ENCODE measurements at regions of chr12 and their contacts with region 1.

Region 1: GRCh38 chr12:14365294-14366208 is at the start of gene ATF7IP:
- DNase-seq: peak; percentile 94 to 95
- H3K4me3 ChIP-seq: peak within 1 kb of the TSS; percentile 90
- H3K27ac ChIP-seq: peak within 1 kb of the TSS; percentile 89
- H3K4me1 ChIP-seq: peaks cover 23% of the 10 kb centered on the region
- H3K27me3 ChIP-seq: no peaks in the 10 kb centered on the region
- CTCF ChIP-seq: no peak; the same call in 1 of the 2 replicates
- total RNA-seq, gene ATF7IP: 72.2 and 94.7 TPM in 2 replicates

Region 2: GRCh38 chr12:14185427-14186192 is 179.9 kb before region 1 on chr12:
- CTCF ChIA-PET with region 1: interaction called, 4 read pairs
- POLR2A ChIA-PET with region 1: no interaction called
- intact Hi-C with region 1: loop called (anchors 2 kb)
- DNase-seq: peak; percentile 39 to 48
- H3K4me3 ChIP-seq: no peak overlapping the region
- H3K27ac ChIP-seq: no peak overlapping the region
- H3K4me1 ChIP-seq: 0 out of 2 replicates have a peak, but pooled peaks cover 7% of the 10 kb centered on the region
- H3K27me3 ChIP-seq: no peaks in the 10 kb centered on the region
- CTCF ChIP-seq: peak; percentile 83

Region 3: DNA sequence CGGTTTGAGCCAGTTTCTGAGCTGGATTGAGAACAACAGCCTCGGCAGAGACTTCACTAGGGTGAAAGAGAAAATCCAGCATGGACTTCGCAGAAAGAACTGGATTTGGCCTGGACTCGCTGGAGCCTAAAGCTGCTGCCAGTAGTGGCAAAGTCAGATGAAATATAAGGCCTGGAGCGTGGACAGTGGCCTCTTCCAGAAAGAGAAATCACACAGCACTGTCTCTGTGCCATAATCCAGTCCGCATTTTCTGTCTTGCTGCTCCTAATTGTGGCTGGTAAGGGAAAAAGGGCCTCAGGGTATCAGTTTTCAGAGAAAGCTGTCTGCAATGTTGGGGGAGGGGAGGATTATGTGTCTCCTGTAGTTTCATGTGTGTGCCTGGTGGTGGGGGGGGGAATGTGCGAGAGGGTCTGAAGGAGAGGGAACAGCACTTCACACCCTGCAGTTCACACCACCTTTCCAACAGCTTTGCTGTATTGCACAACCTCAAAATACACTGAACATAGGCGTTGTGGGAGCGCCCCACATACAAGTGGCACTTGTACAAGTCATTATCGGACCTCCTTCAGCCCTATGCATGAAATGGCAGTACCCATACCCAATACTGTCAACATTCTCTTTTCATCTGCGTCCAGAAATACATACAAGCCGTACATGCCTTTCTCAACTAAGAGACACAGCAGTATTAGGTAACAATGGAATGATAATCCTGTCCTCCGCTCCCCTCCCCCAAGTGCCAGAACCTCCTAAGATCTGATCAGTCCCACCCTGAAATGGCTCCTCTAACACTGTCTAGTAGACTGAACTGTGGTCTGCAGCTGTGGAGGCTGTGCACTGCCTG is 107.6 kb before region 1 on chr12:
- CTCF ChIA-PET with region 1: interaction called, 4 read pairs
- POLR2A ChIA-PET with region 1: interaction called, 11 read pairs
- intact Hi-C with region 1: loop called (anchors 1 kb)
- DNase-seq: peak; percentile 86 to 95
- H3K4me3 ChIP-seq: no peak overlapping the region
- H3K27ac ChIP-seq: peak overlapping the region; percentile 93
- H3K4me1 ChIP-seq: peaks cover 40% of the 10 kb centered on the region
- H3K27me3 ChIP-seq: no peaks in the 10 kb centered on the region
- CTCF ChIP-seq: no peak

Region 4: GRCh38 chr12:14390870-14391530 is 25.4 kb after region 1 on chr12:
- CTCF ChIA-PET with region 1: no interaction called
- POLR2A ChIA-PET with region 1: no interaction called
- intact Hi-C with region 1: no loop called
- DNase-seq: no peak
- H3K4me3 ChIP-seq: no peak overlapping the region
- H3K27ac ChIP-seq: no peak overlapping the region
- H3K4me1 ChIP-seq: no peaks in the 10 kb centered on the region
- H3K27me3 ChIP-seq: no peaks in the 10 kb centered on the region
- CTCF ChIP-seq: no peak

Region 5: GRCh38 chr12:14403711-14404196 is 38.2 kb after region 1 on chr12:
- CTCF ChIA-PET with region 1: interaction called, 11 read pairs
- POLR2A ChIA-PET with region 1: no interaction called
- intact Hi-C with region 1: no loop called
- DNase-seq: no peak
- H3K4me3 ChIP-seq: no peak overlapping the region
- H3K27ac ChIP-seq: peak overlapping the region; percentile 1; the same call in 1 of the 2 replicates
- H3K4me1 ChIP-seq: peaks cover 9% of the 10 kb centered on the region; the same call in 1 of the 2 replicates
- H3K27me3 ChIP-seq: no peaks in the 10 kb centered on the region
- CTCF ChIP-seq: no peak

Region 6: GRCh38 chr12:14417715-14418114 is 52.2 kb after region 1 on chr12:
- CTCF ChIA-PET with region 1: interaction called, 5 read pairs
- POLR2A ChIA-PET with region 1: interaction called, 9 read pairs
- intact Hi-C with region 1: loop called (anchors 5 kb)
- DNase-seq: peak in 1 of 2 experiments; percentile 61
- H3K4me3 ChIP-seq: no peak overlapping the region
- H3K27ac ChIP-seq: no peak overlapping the region
- H3K4me1 ChIP-seq: no peaks in the 10 kb centered on the region; the same call in 1 of the 2 replicates
- H3K27me3 ChIP-seq: no peaks in the 10 kb centered on the region
- CTCF ChIP-seq: no peak

Region 7: DNA sequence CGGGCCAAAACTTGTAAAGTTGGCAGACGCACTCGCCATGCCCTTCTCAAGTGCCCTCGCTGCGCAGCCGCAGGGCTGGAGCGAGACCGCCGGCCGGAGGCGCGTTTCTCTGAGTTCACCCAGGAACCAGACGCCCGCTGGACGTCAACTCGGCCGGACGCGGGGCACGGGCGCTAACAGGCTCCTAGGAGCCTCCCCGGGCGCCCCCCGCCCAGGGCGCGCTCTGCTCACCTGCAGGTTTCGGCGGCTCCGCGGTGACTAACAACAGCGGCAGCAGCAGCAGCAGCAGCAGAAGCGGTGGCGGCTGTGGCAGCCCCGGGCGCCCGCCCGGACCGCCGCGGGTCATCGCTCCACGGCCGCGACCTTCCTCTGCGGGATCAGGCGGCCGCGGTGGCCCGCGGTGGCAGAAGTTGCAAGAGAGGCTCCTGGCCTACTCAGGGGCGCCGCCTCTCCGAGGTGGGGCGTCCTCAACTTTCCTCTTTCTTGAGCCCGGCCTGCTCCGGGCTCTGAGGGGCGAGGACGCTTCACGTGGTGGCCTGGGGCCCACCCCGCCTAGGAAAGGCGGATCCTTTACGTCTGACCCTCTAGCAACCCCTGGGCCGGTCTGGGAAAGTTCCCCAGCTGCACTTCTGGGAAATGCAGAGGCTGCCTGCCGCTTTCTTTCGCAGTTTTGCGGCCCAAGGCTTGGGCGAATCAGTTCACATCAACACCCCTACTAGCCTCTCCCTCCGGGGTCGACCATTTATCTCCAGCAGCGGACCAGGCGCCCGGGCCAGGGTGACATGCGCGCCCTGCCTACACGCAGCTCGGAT is 202.0 kb after region 1 on chr12 and contains the start of gene PLBD1:
- CTCF ChIA-PET with region 1: no interaction called
- POLR2A ChIA-PET with region 1: interaction called, 3 read pairs
- intact Hi-C with region 1: loop called (anchors 5 kb)
- DNase-seq: peak; percentile 40 to 59
- H3K4me3 ChIP-seq: peak within 1 kb of the TSS; percentile 60
- H3K27ac ChIP-seq: no peak within 1 kb of the TSS
- H3K4me1 ChIP-seq: no peaks in the 10 kb centered on the region
- H3K27me3 ChIP-seq: no peaks in the 10 kb centered on the region
- CTCF ChIP-seq: no peak
- total RNA-seq, gene PLBD1: 13.8 and 17.8 TPM in 2 replicates

Region 8: DNA sequence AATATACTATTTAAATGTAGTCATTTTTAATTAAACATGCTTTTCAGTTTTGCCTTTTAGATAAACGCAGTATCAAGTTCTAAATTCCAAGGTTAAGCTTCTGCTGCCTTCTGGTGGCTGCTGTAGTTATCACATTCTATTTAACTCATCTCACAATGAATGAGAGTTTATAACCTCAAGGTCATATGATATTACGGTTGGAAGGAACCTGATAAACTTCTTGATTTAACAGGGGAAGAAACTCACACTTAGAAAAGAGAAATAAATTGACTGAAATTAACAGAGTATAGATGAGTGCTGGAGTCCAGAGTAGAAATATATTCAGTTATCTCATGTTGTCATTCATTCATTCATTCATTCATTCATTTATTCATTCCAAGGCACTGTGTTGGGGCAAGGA is 299.0 kb after region 1 on chr12:
- CTCF ChIA-PET with region 1: no interaction called
- POLR2A ChIA-PET with region 1: no interaction called
- intact Hi-C with region 1: loop called (anchors 5 kb)
- DNase-seq: peak; percentile 37 to 45
- H3K4me3 ChIP-seq: no peak overlapping the region
- H3K27ac ChIP-seq: no peak overlapping the region
- H3K4me1 ChIP-seq: no peaks in the 10 kb centered on the region
- H3K27me3 ChIP-seq: no peaks in the 10 kb centered on the region
- CTCF ChIP-seq: peak; percentile 79

Measured in PC-9 (cell line).